GM12878 (cell line): ENCODE measurements at regions of chr11 and their contacts with region 1.

Region 1: GRCh38 chr11:83249972-83250593 is 36.1 kb downstream of the CCDC90B start:
- DNase-seq: no peak
- ATAC-seq: peak; percentile 93
- H3K4me3 ChIP-seq: no peak overlapping the region
- H3K27ac ChIP-seq: no peak overlapping the region
- H3K4me1 ChIP-seq: peaks cover 12% of the 10 kb centered on the region
- H3K27me3 ChIP-seq: no peaks in the 10 kb centered on the region
- CTCF ChIP-seq: peak; percentile 51 to 68 (median 66)
- EP300 ChIP-seq: no peak
- POLR2A ChIP-seq: no peak
- RAD21 ChIP-seq: peak; percentile 75

Region 2: DNA sequence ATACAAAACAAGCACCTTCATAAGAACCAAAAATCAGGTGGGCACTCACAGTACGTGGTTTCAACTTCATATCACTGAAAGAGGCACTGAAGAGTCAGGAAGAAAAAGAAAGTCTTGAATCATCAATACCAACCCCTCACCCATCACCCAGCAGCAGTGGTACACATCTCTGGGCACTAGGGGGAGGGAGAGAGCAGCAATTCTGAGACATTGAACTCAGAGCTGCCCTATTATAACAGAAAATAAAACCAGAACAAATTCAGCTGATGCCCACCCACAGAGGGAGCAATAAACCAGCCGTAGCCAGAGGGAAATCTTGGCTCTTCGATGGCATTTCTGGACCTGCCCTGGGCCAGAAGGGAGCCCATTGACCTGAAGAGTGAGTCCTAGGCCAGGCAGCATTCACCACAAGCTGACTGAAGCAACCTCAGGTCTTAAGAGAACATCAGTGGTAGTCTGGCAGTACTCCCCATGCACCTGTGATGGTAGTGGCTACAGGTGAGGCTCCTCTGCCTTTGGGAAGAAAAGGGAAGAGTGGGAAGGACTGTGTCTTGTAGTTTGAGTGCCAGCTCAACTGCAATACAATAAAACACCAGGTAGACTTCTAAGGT is 474.2 kb before region 1 on chr11:
- CTCF ChIA-PET with region 1: interaction called, 10 read pairs
- POLR2A ChIA-PET with region 1: no interaction called
- RAD21 ChIA-PET with region 1: interaction called, 5 read pairs
- SMC1A ChIA-PET with region 1: interaction called, 6 read pairs
- in situ Hi-C with region 1: no loop called
- intact Hi-C with region 1: no loop called
- DNase-seq: no peak
- ATAC-seq: peak; percentile 100
- H3K4me3 ChIP-seq: no peak overlapping the region
- H3K27ac ChIP-seq: no peak overlapping the region
- H3K4me1 ChIP-seq: no peaks in the 10 kb centered on the region
- H3K27me3 ChIP-seq: no peaks in the 10 kb centered on the region
- CTCF ChIP-seq: peak; percentile 76 to 90 (median 85)
- EP300 ChIP-seq: no peak
- POLR2A ChIP-seq: no peak
- RAD21 ChIP-seq: peak; percentile 64

Region 3: GRCh38 chr11:82906244-82906654 is 343.8 kb before region 1 on chr11:
- CTCF ChIA-PET with region 1: interaction called, 87 read pairs
- POLR2A ChIA-PET with region 1: no interaction called
- RAD21 ChIA-PET with region 1: interaction called, 20 read pairs
- SMC1A ChIA-PET with region 1: interaction called, 56 read pairs
- in situ Hi-C with region 1: loop called (anchors 5 kb)
- intact Hi-C with region 1: loop called (anchors 1 kb)
- DNase-seq: no peak
- ATAC-seq: no peak
- H3K4me3 ChIP-seq: no peak overlapping the region
- H3K27ac ChIP-seq: peak overlapping the region; percentile 49; the same call in 1 of the 2 replicates
- H3K4me1 ChIP-seq: peaks cover 15% of the 10 kb centered on the region; the same call in 1 of the 2 replicates
- H3K27me3 ChIP-seq: no peaks in the 10 kb centered on the region
- CTCF ChIP-seq: peak in 1 of 3 experiments; percentile 32; a peak in 2 of 6 replicates
- EP300 ChIP-seq: no peak
- POLR2A ChIP-seq: no peak
- RAD21 ChIP-seq: peak; percentile 66

Region 4: DNA sequence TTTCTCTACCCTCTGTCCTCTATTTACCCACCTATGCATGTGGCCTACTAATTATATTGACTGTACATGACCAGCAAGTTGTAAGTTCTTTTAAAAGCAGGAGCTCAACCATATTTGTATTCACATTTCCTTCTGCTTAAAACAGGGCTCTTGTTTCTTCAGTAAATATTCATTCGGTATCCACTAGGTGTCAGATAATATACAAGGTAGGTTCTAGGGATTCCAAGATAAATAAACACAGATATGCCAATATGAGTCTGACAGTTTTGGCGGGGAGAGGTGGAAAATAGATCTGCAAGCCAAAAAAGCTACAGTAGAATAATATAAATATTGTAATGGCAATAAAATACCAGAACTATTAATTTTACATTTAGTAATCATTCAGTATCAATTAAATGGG is 163.0 kb before region 1 on chr11:
- CTCF ChIA-PET with region 1: interaction called, 42 read pairs
- POLR2A ChIA-PET with region 1: no interaction called
- RAD21 ChIA-PET with region 1: interaction called, 9 read pairs
- SMC1A ChIA-PET with region 1: interaction called, 24 read pairs
- in situ Hi-C with region 1: no loop called
- intact Hi-C with region 1: loop called (anchors 5 kb)
- DNase-seq: no peak
- ATAC-seq: peak; percentile 68
- H3K4me3 ChIP-seq: no peak overlapping the region
- H3K27ac ChIP-seq: no peak overlapping the region
- H3K4me1 ChIP-seq: no peaks in the 10 kb centered on the region
- H3K27me3 ChIP-seq: no peaks in the 10 kb centered on the region
- CTCF ChIP-seq: peak in 2 of 3 experiments; percentile 18 to 44; a peak in 1 of 6 replicates
- EP300 ChIP-seq: no peak
- POLR2A ChIP-seq: no peak
- RAD21 ChIP-seq: peak; percentile 50

Region 5: DNA sequence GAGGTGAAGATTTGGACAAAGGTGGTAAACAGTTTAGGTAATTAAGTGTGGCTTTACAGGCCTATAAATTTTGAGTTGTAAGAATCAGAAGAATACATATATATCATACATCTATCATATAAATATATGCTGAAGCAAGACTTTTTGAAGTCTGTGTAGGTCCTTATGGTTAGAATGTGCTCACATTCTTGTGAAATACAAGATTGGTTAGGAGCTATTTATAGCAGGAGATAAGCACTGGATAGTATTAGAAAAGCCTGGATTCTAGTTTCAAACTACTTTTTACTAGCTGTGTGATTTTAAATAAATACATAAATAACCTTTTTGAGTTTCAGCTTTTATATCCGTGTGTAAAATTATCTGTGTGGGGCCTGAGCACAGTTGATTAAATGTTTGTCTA is 14.3 kb before region 1 on chr11:
- CTCF ChIA-PET with region 1: interaction called, 27 read pairs
- POLR2A ChIA-PET with region 1: no interaction called
- RAD21 ChIA-PET with region 1: interaction called, 7 read pairs
- SMC1A ChIA-PET with region 1: interaction called, 19 read pairs
- in situ Hi-C with region 1: no loop called
- intact Hi-C with region 1: no loop called
- DNase-seq: no peak
- ATAC-seq: no peak
- H3K4me3 ChIP-seq: no peak overlapping the region
- H3K27ac ChIP-seq: no peak overlapping the region
- H3K4me1 ChIP-seq: no peaks in the 10 kb centered on the region
- H3K27me3 ChIP-seq: no peaks in the 10 kb centered on the region
- CTCF ChIP-seq: no peak
- EP300 ChIP-seq: no peak
- POLR2A ChIP-seq: no peak
- RAD21 ChIP-seq: no peak